Activated CD8-positive, alpha-beta T cell treated with anti-CD3 and anti-CD28 coated beads for 36 hours (primary cell): ENCODE measurements at regions of chr21 and their contacts with region 1.

Region 1: DNA sequence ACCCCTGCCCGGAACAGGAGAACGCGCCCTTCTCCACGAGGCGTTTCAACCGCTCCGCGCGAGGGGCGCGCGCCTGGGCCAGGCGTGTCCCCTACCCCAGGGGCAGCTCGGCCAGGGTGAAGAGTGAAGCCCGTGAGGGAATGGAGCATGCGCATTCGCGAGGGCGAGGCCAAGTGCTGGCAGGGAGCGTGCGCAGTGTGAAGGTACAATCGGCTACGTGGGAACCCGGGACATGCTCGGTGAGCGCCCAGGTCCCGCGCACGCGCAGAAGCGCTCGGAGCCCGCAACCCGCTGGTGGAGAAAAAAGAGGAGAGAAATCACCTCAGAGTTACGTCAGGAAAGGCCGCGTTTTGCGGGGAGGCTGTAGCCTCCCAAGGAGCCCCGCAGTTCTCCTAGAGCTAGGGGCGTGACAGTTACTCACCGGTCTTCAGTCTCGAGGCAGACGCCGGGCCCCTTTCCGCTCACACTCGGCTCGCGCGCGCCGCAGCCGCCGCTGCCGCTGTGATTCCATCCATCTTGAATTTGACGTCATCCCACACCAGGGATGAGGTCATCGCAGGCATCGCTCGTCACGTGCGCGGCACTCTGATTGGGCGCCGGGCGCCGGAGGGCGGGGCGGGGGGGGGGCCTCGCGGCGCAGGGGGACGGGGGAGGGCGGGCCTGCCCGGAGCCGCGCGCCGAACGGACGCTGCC is at the start of gene ZBTB21:
- DNase-seq: peak; percentile 98
- ATAC-seq: peak; percentile 90
- H3K4me3 Mint-ChIP-seq: peak within 1 kb of the TSS; percentile 93
- H3K27ac Mint-ChIP-seq: peak within 1 kb of the TSS; percentile 99
- H3K4me1 Mint-ChIP-seq: peaks cover 28% of the 10 kb centered on the region
- H3K27me3 Mint-ChIP-seq: no peaks in the 10 kb centered on the region
- CTCF ChIP-seq: no peak
- total RNA-seq, gene ZBTB21: 29.6 to 29.7 TPM

Region 2: GRCh38 chr21:42027822-42028765 is 18.1 kb after region 1 on chr21:
- CTCF ChIA-PET with region 1: no interaction called
- POLR2A ChIA-PET with region 1: no interaction called
- intact Hi-C with region 1: no loop called
- DNase-seq: no peak
- ATAC-seq: no peak
- H3K4me3 Mint-ChIP-seq: no peak overlapping the region
- H3K27ac Mint-ChIP-seq: no peak overlapping the region
- H3K4me1 Mint-ChIP-seq: no peaks in the 10 kb centered on the region
- H3K27me3 Mint-ChIP-seq: no peaks in the 10 kb centered on the region
- CTCF ChIP-seq: no peak

Region 3: DNA sequence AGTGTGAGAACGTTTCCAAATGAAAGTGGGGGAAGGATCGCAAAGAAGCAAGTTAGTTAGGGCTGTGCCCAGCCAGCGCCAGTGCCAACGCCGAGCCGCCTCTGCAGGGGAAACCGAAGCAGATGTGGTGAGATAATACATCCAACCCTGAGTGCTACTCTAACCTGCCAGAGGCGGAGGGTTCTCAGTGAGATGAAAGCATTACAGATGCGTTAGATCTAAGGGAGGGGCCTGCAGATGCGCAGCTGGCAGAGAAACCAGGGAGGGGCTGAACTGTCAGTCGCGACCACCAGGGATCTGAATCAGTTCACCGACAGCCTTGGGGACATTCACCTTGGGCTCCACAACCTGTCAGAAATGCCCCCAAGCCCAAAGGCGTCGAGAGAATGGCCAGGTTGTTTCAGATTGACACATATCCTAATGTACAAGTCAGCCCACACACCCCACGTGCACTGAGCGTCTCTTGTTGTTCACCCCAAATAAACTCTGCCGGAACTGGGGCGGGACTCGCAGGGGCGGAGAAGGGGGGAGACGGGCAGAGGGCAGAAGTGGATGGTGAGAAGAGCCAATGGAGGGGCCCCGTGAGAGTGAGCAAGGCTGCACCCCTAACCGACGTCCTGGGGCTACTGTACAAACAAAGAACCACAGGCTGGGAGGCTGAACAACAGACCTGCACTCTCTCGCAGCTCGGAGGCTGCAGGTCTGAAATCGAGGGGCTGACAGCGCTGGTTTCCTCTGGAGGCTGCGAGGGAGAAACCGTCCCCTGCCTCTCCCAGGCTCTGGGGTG is 52.5 kb after region 1 on chr21:
- CTCF ChIA-PET with region 1: no interaction called
- POLR2A ChIA-PET with region 1: no interaction called
- intact Hi-C with region 1: loop called (anchors 2 kb)
- DNase-seq: peak; percentile 95
- ATAC-seq: peak; percentile 68
- H3K4me3 Mint-ChIP-seq: peak overlapping the region; percentile 71
- H3K27ac Mint-ChIP-seq: peak overlapping the region; percentile 95
- H3K4me1 Mint-ChIP-seq: peaks cover 44% of the 10 kb centered on the region
- H3K27me3 Mint-ChIP-seq: no peaks in the 10 kb centered on the region
- CTCF ChIP-seq: no peak

Region 4: DNA sequence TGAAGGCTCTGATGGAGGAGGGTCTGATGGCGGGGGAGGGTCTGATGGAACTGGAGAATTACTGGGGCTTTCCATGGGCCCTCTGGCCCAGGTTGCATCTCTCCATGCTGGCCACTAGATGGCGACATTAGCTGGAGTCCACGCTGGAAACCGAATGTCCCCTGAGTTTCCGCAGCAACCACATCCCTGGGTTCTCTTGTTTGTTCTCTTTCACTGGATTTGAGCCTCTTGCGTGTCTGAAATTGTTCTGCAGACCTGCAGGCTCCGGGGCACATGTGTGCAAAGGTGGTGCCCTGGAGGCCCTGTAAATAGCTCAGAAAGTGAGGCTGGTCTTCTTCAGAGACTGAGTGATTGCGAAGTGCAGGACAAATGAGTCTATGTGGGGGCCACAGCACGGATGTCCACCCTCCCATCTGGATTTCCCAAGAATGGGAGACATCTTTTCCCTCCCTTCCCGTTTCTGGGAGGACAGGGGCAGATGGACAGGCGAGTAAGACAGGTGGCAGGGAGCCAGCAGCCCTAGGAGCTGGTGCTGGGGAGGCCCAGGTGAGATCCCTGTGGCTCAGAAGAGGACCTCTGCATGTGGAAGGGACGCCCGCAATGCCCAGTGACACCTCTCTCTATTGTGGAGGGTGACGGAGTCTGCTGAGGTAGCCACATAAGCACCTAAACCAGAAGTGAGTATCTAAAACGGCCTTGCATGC is 135.7 kb after region 1 on chr21:
- CTCF ChIA-PET with region 1: no interaction called
- POLR2A ChIA-PET with region 1: no interaction called
- intact Hi-C with region 1: no loop called
- DNase-seq: peak; percentile 75
- ATAC-seq: peak; percentile 89
- H3K4me3 Mint-ChIP-seq: no peak overlapping the region
- H3K27ac Mint-ChIP-seq: no peak overlapping the region
- H3K4me1 Mint-ChIP-seq: peaks cover 8% of the 10 kb centered on the region
- H3K27me3 Mint-ChIP-seq: no peaks in the 10 kb centered on the region
- CTCF ChIP-seq: peak; percentile 91